HCT116 (cell line): ENCODE measurements at regions of chr11 and their contacts with region 1.

Region 1: DNA sequence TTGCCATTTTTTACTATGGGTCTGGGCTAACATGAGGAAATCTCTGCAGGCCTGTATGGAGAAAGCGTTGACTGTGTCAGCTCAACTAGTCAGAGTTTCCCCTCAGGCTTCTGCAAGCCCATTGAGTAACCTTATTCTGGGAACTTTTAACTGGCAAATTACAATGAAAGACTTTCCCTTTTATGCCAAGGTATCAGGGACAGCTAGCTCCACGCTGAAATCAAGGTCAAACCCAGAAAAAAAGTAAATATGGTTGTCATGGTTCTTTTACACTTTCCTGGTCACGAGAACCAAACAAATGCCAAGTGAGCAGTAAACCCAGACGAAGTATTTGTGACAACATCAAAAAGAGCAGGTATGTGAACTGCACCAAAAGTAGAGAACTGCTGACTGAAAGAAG is 13.8 kb downstream of the OSBP start:
- DNase-seq: no peak
- ATAC-seq: no peak
- H3K4me3 ChIP-seq: no peak overlapping the region
- H3K27ac ChIP-seq: no peak overlapping the region
- H3K4me1 ChIP-seq: no peaks in the 10 kb centered on the region
- H3K27me3 ChIP-seq: no peaks in the 10 kb centered on the region
- CTCF ChIP-seq: no peak
- POLR2A ChIP-seq: no peak
- RAD21 ChIP-seq: no peak

Region 2: DNA sequence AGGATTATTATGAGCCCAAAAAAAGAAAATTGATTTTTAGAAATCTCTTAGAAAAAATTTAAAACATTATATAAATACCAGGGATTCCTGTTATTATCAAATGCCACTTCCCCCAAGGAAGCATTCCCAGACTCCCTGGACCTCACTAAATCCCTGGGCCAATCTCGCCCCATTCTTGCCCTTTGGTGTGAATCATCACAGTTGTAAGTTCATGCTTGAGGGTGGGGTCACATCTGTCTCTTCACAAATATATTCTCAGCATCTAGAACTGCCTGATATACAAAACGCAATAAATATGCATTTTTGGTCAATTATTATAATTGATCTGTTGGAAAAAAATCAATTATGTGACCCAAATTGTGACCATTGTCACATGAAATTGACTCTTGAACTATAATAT is 153.3 kb before region 1 on chr11:
- CTCF ChIA-PET with region 1: no interaction called
- POLR2A ChIA-PET with region 1: no interaction called
- RAD21 ChIA-PET with region 1: no interaction called
- intact Hi-C with region 1: no loop called
- DNase-seq: no peak
- ATAC-seq: no peak
- H3K4me3 ChIP-seq: no peak overlapping the region
- H3K27ac ChIP-seq: no peak overlapping the region
- H3K4me1 ChIP-seq: no peaks in the 10 kb centered on the region
- H3K27me3 ChIP-seq: no peaks in the 10 kb centered on the region
- CTCF ChIP-seq: no peak
- POLR2A ChIP-seq: no peak
- RAD21 ChIP-seq: no peak

Region 3: GRCh38 chr11:59510940-59511589 is 90.7 kb before region 1 on chr11 and contains the start of gene OR4D9:
- CTCF ChIA-PET with region 1: no interaction called
- POLR2A ChIA-PET with region 1: no interaction called
- RAD21 ChIA-PET with region 1: no interaction called
- intact Hi-C with region 1: no loop called
- DNase-seq: no peak
- ATAC-seq: no peak
- H3K4me3 ChIP-seq: no peak within 1 kb of the TSS
- H3K27ac ChIP-seq: no peak within 1 kb of the TSS
- H3K4me1 ChIP-seq: no peaks in the 10 kb centered on the region
- H3K27me3 ChIP-seq: no peaks in the 10 kb centered on the region
- CTCF ChIP-seq: no peak
- POLR2A ChIP-seq: no peak
- RAD21 ChIP-seq: no peak
- total RNA-seq, gene OR4D9: not detected

Region 4: DNA sequence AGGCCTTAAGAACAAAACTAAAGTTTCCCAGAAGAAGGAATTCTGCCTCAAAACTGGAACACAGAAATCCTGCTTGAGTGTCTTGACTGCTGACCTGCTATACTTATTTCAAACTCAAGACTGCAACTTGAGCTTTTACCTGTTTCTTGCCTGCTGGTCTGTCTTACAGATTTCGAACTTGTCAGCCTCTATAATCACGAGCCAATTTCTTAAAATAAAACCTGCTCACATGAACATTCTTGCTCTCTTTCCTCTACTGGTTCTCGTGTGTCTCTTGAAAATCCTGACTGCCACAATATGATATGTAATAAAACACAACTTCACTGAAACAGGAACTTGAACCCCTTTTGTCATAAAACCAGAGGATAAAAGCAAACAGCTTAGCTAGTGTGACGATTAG is 53.1 kb after region 1 on chr11:
- CTCF ChIA-PET with region 1: no interaction called
- POLR2A ChIA-PET with region 1: interaction called, 3 read pairs
- RAD21 ChIA-PET with region 1: no interaction called
- intact Hi-C with region 1: loop called (anchors 5 kb)
- DNase-seq: no peak
- ATAC-seq: no peak
- H3K4me3 ChIP-seq: no peak overlapping the region
- H3K27ac ChIP-seq: no peak overlapping the region
- H3K4me1 ChIP-seq: no peaks in the 10 kb centered on the region
- H3K27me3 ChIP-seq: no peaks in the 10 kb centered on the region
- CTCF ChIP-seq: no peak
- POLR2A ChIP-seq: no peak
- RAD21 ChIP-seq: no peak

Region 5: GRCh38 chr11:59891781-59892181 is 290.0 kb after region 1 on chr11:
- CTCF ChIA-PET with region 1: no interaction called
- POLR2A ChIA-PET with region 1: no interaction called
- RAD21 ChIA-PET with region 1: no interaction called
- intact Hi-C with region 1: no loop called
- DNase-seq: no peak
- ATAC-seq: no peak; the same call in 1 of the 2 replicates
- H3K4me3 ChIP-seq: no peak overlapping the region
- H3K27ac ChIP-seq: no peak overlapping the region
- H3K4me1 ChIP-seq: no peaks in the 10 kb centered on the region
- H3K27me3 ChIP-seq: no peaks in the 10 kb centered on the region
- CTCF ChIP-seq: no peak
- POLR2A ChIP-seq: no peak
- RAD21 ChIP-seq: no peak

Region 6: GRCh38 chr11:59923813-59924212 is 322.0 kb after region 1 on chr11:
- CTCF ChIA-PET with region 1: no interaction called
- POLR2A ChIA-PET with region 1: no interaction called
- RAD21 ChIA-PET with region 1: no interaction called
- intact Hi-C with region 1: no loop called
- DNase-seq: no peak
- ATAC-seq: no peak
- H3K4me3 ChIP-seq: no peak overlapping the region
- H3K27ac ChIP-seq: no peak overlapping the region
- H3K4me1 ChIP-seq: no peaks in the 10 kb centered on the region
- H3K27me3 ChIP-seq: no peaks in the 10 kb centered on the region
- CTCF ChIP-seq: no peak
- POLR2A ChIP-seq: no peak
- RAD21 ChIP-seq: no peak